Left ventricle myocardium inferior (tissue), 1 donor: ENCODE measurements at regions of chr7 and their contacts with region 1.

Region 1: DNA sequence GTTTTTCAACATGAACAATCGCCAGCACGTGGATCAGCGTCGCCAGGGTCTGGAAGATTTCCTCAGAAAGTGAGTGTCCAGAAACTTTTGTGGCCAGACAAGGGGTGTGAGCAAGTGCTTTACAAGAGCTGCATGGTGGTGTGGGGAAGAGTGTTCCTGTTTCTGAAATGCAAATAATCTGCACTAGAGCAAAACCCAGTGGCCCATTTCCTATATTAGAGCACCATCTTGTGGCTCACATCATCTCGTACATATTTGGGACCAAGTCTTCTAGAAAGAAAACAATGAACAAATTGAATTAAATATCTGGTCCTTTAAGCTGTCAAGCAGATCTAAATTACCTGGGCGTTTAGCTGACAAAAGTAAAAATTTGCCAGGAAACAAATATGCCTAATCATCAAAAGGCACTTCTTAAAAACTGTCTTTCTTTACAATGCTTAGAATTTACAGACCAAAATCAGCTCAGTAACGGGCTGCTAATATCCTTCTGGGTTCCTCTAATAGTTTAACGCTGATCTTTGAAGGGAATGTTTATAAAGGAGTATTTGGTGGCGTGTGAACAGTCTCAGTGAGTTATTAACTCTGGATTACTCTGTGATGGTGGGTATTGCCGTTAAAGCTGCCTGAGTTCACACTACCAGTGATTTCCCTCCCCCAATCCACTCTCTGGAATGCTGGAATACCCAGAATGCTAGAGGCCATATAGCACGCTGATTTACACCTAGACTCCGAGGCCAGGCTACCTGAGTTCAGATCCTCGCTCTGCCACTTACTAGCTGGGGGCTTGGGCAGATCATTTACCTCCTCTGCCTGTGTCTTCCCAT is 73.6 kb downstream of the SNX10 start:
- DNase-seq: no peak
- H3K4me3 ChIP-seq: no peak overlapping the region
- H3K27ac ChIP-seq: no peak overlapping the region
- H3K4me1 ChIP-seq: no peaks in the 10 kb centered on the region
- H3K27me3 ChIP-seq: peaks cover 65% of the 10 kb centered on the region
- CTCF ChIP-seq: peak; percentile 77

Region 2: DNA sequence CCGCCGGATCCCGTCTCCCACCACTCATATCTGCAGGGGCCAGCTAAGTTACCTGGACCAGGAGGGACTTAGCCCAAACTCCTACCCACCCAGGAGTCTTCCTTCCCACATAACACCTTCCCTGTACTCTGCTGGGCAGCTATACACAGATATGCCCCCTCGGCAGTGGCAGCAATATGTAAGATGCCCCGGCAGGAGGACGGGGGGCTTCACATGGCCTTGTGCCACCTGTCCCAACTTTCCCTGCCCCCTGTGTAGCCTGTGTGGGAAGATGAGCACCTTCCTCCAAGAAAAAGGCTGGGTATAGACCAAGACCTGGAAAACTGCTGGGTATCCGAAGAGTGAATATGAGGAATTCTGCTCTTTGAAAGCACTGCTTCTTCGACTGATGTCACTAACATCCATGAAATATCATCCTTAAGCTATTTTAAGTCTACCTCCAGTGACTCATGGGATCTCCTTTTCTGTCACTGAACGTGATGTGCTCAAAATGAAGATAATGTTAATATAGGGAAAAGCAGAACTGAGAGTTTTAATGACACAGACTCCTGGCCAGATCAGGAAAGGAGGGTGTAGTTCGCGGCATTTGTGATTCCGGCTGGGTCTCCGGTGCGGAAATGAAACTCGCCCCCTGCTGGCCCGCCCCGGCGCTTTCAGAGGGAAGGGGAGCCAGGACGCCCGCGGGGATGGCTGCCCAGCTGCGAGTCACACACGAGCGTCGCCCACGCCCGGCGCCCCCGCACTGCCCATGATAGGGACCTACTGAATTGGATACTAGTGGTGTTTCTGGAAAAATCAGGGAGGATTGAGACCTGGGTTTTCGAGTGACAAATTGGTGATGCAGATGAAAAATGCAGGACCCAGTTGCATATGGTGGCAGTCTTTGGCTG is 470.1 kb before region 1 on chr7:
- intact Hi-C with region 1: loop called (anchors 5 kb)
- DNase-seq: peak; percentile 63
- H3K4me3 ChIP-seq: peak overlapping the region; percentile 43
- H3K27ac ChIP-seq: no peak overlapping the region
- H3K4me1 ChIP-seq: peaks cover 8% of the 10 kb centered on the region
- H3K27me3 ChIP-seq: peaks cover 55% of the 10 kb centered on the region
- CTCF ChIP-seq: peak; percentile 76

Region 3: DNA sequence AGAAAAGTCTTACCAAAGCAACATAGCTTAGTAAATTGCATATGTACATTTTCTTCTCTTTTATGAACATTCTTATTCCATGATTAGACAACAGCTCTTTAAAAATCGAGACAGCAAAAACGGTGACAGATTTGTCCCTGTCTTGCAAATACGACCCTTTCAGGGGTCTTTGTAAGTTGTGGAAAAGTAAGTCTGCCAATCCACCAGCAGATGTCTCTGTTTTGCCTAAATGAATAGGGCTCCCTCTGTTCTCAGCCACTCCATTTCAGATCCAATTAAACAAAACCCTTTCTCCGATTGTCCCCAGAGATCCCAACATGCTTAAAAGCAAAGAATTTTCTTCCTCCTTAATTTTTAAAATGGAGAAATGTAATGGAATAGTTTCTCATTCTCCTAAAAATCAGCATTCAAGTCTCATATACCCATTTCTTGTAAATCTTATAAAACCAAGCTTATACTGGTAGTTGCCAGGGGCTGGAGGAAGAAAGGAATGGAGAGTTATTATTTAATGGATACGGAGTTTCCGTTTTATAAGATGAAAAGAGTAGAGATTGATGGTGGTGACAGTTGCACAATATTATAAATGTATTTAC is 274.3 kb before region 1 on chr7:
- intact Hi-C with region 1: loop called (anchors 5 kb)
- DNase-seq: no peak
- H3K4me3 ChIP-seq: no peak overlapping the region
- H3K27ac ChIP-seq: no peak overlapping the region
- H3K4me1 ChIP-seq: no peaks in the 10 kb centered on the region
- H3K27me3 ChIP-seq: peaks cover 7% of the 10 kb centered on the region
- CTCF ChIP-seq: peak; percentile 74

Region 4: GRCh38 chr7:26667500-26668133 is 302.3 kb after region 1 on chr7:
- intact Hi-C with region 1: loop called (anchors 5 kb)
- DNase-seq: no peak
- H3K4me3 ChIP-seq: no peak overlapping the region
- H3K27ac ChIP-seq: no peak overlapping the region
- H3K4me1 ChIP-seq: no peaks in the 10 kb centered on the region
- H3K27me3 ChIP-seq: peaks cover 51% of the 10 kb centered on the region
- CTCF ChIP-seq: peak; percentile 77

Region 5: DNA sequence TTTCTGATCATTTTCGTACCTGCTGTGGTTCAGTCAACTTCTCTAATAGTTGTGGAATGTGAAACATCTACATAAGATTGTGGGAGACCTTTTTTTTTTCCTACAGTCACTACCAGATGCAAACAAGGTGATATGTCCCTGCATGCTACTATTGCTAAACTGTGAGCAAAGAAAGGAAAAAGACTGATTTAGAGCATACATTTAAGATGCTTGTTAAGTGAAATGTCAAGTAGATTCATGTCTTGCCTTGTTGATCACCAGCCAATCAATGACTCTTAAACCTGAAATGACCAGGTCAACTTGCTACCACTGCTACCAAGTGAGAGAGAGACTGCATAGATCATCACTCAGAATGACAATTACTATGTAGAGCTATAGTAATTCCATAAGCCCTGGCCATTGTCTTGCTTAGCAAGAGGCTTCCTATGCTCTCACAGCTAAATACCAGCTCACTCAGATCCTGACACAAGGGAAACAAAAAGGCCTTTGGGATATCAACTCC is 583.4 kb after region 1 on chr7:
- intact Hi-C with region 1: no loop called
- DNase-seq: no peak
- H3K4me3 ChIP-seq: no peak overlapping the region
- H3K27ac ChIP-seq: no peak overlapping the region
- H3K4me1 ChIP-seq: no peaks in the 10 kb centered on the region
- H3K27me3 ChIP-seq: peaks cover 82% of the 10 kb centered on the region
- CTCF ChIP-seq: no peak

Region 6: GRCh38 chr7:27160546-27161213 is 795.4 kb after region 1 on chr7:
- intact Hi-C with region 1: loop called (anchors 5 kb)
- DNase-seq: peak; percentile 81
- H3K4me3 ChIP-seq: peak overlapping the region; percentile 72
- H3K27ac ChIP-seq: no peak overlapping the region
- H3K4me1 ChIP-seq: peaks cover 42% of the 10 kb centered on the region
- H3K27me3 ChIP-seq: peaks cover 100% of the 10 kb centered on the region
- CTCF ChIP-seq: peak; percentile 100